ENCODE measurements at regions of chr5 and their contacts with region 1.

Region 1: GRCh38 chr5:149485655-149486425 is 65.4 kb downstream of the CSNK1A1 start:
- DNase-seq: peak; percentile 99
- H3K4me3 ChIP-seq: no peak overlapping the region
- H3K27ac ChIP-seq: peak overlapping the region; percentile 97
- H3K4me1 ChIP-seq: peaks cover 63% of the 10 kb centered on the region
- H3K27me3 ChIP-seq: no peaks in the 10 kb centered on the region
- CTCF ChIP-seq: no peak

Region 2: GRCh38 chr5:148653836-148654781 is 831.7 kb before region 1 on chr5 and contains the start of gene HTR4:
- CTCF ChIA-PET with region 1: no interaction called
- dilution Hi-C with region 1: no loop called
- in situ Hi-C with region 1: no loop called
- intact Hi-C with region 1: no loop called
- DNase-seq: no peak
- H3K4me3 ChIP-seq: no peak within 1 kb of the TSS
- H3K27ac ChIP-seq: no peak within 1 kb of the TSS
- H3K4me1 ChIP-seq: no peaks in the 10 kb centered on the region
- H3K27me3 ChIP-seq: peaks cover 25% of the 10 kb centered on the region
- CTCF ChIP-seq: no peak
- total RNA-seq, gene HTR4: not detected

Region 3: GRCh38 chr5:149381987-149382340 is 103.9 kb before region 1 on chr5:
- CTCF ChIA-PET with region 1: no interaction called
- dilution Hi-C with region 1: no loop called
- in situ Hi-C with region 1: no loop called
- intact Hi-C with region 1: no loop called
- DNase-seq: peak; percentile 49
- H3K4me3 ChIP-seq: no peak overlapping the region
- H3K27ac ChIP-seq: no peak overlapping the region
- H3K4me1 ChIP-seq: peaks cover 13% of the 10 kb centered on the region
- H3K27me3 ChIP-seq: no peaks in the 10 kb centered on the region
- CTCF ChIP-seq: peak; percentile 90 to 96

Region 4: DNA sequence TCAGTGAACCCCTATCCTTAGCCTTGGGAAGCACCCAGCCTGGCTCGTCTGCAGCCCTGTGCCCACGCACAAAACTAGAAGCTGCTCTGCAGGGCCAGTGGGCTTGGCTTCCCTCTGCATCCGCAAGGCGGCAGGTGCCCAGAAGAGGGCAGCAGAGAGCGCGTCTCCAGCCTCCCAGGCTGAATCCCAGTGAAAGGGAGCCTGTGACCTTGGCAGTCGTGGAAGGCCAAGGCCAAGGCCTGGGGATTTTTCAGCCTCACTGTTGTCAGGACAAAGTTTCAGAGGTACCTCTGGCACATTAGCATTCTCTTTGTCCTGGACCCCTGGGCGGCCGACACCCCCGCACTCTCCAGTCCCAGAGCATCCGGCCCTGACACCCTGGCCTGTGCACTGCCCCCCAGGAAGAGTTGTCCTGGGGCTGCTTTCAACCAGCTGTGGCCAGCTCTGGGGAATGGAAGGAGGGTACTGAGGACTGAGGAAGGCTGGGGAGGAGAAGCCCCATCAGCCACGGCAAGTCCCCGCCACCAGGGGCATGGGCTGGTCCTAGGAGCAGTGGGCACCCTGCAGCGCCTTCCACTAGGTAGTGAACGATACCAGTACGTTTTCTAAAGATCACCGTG is 43.2 kb before region 1 on chr5:
- CTCF ChIA-PET with region 1: interaction called, 4 read pairs
- dilution Hi-C with region 1: no loop called
- in situ Hi-C with region 1: no loop called
- intact Hi-C with region 1: loop called (anchors 1 kb)
- DNase-seq: peak; percentile 80
- H3K4me3 ChIP-seq: no peak overlapping the region
- H3K27ac ChIP-seq: peak overlapping the region; percentile 89
- H3K4me1 ChIP-seq: peaks cover 70% of the 10 kb centered on the region
- H3K27me3 ChIP-seq: no peaks in the 10 kb centered on the region
- CTCF ChIP-seq: peak; percentile 91 to 94

Region 5: GRCh38 chr5:149452665-149453617 is 32.9 kb before region 1 on chr5:
- CTCF ChIA-PET with region 1: no interaction called
- dilution Hi-C with region 1: no loop called
- in situ Hi-C with region 1: no loop called
- intact Hi-C with region 1: loop called (anchors 1 kb)
- DNase-seq: peak; percentile 90
- H3K4me3 ChIP-seq: no peak overlapping the region
- H3K27ac ChIP-seq: peak overlapping the region; percentile 86
- H3K4me1 ChIP-seq: peaks cover 48% of the 10 kb centered on the region
- H3K27me3 ChIP-seq: no peaks in the 10 kb centered on the region
- CTCF ChIP-seq: peak in 1 of 2 donors; percentile 33

Region 6: GRCh38 chr5:149466457-149466972 is 19.3 kb before region 1 on chr5:
- CTCF ChIA-PET with region 1: no interaction called
- dilution Hi-C with region 1: no loop called
- in situ Hi-C with region 1: no loop called
- intact Hi-C with region 1: no loop called
- DNase-seq: peak; percentile 45
- H3K4me3 ChIP-seq: no peak overlapping the region
- H3K27ac ChIP-seq: no peak overlapping the region
- H3K4me1 ChIP-seq: peaks cover 6% of the 10 kb centered on the region
- H3K27me3 ChIP-seq: no peaks in the 10 kb centered on the region
- CTCF ChIP-seq: no peak

Region 7: DNA sequence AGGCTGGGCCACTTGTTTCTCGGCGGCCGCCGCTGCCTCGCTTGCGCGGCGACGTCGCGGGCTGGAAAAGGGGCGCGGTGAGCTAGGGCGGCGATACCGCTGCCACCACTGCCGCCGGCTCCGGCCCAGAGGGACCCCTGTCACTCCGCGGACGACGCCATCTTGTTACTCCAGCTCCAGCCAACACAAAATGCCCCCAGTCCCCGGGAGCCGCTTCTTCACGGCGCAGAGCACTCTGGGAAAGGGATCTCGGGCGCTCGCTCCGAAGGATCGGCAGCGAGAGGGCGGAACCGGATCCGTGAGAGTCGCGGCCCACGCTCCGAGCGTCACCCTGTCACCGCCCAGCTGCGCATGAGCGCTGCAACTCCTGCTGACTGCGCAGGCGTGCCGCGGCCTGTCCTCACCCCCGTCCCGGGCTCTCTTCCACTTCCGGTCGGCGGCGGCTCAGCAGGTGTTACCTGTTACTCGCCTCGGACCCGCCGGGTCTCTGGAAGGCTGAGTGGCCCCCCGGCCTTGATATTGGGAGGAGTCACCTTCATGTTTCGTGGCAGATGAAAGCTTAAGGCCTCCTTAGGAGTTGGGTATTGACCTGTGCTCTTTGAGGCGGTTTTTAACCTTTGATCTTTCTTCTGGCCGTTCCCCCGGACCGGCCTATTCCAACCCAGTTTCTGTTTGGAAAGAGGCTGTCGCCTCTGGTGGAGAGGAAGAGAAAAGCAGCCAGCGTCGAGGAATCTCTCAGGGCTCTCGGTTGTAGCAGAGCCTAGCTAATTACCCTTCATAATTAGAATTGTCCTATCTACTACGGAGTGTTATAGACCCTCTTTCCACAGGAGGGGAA is 65.6 kb after region 1 on chr5 and contains the start of gene CSNK1A1:
- CTCF ChIA-PET with region 1: interaction called, 4 read pairs
- dilution Hi-C with region 1: no loop called
- in situ Hi-C with region 1: no loop called
- intact Hi-C with region 1: loop called (anchors 1 kb)
- DNase-seq: peak; percentile 99
- H3K4me3 ChIP-seq: peak within 1 kb of the TSS; percentile 71 to 94 (median 77)
- H3K27ac ChIP-seq: peak within 1 kb of the TSS; percentile 91
- H3K4me1 ChIP-seq: peaks cover 20% of the 10 kb centered on the region
- H3K27me3 ChIP-seq: no peaks in the 10 kb centered on the region
- CTCF ChIP-seq: peak; percentile 65 to 82
- total RNA-seq, gene CSNK1A1: 444 to 457 TPM

Region 8: DNA sequence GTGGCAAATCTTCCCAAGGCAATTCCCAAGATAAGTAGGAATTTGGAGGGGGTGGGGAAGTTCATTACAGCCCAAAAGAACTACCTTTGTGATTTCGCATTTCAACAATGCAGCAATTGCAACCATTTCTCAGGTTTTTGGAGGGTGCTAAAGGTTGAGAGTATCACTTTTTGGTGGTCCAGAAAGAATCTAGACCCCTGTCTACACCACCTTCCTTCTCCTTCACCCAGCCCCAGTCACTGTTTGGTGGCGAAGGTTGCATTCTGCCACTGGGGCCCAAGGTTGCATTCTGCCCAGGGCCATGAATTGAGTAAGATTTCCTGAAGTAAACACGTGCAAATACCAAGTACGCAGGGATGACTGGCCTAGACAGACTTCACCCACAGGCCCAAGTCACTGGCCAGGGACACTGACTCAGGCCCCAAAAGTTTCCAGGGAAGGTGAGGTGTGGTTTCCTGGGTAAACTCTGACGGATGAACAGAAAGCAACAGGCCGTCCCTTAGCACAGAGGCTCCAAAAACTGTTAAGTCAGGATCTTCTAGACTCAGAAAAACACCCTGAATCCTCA is 453.0 kb after region 1 on chr5:
- CTCF ChIA-PET with region 1: no interaction called
- dilution Hi-C with region 1: no loop called
- in situ Hi-C with region 1: no loop called
- intact Hi-C with region 1: loop called (anchors 5 kb)
- DNase-seq: peak; percentile 98
- H3K4me3 ChIP-seq: peak overlapping the region in 1 of 3 experiments; percentile 17
- H3K27ac ChIP-seq: peak overlapping the region; percentile 100
- H3K4me1 ChIP-seq: peaks cover 68% of the 10 kb centered on the region
- H3K27me3 ChIP-seq: no peaks in the 10 kb centered on the region
- CTCF ChIP-seq: peak in 1 of 2 donors; percentile 7